H1 (cell line): ENCODE measurements at regions of chr19 and their contacts with region 1.

Region 1: GRCh38 chr19:34999498-35000341 is at the start of gene GRAMD1A:
- DNase-seq: peak; percentile 69 to 89
- H3K4me3 ChIP-seq: peak within 1 kb of the TSS; percentile 73 to 92 (median 84)
- H3K27ac ChIP-seq: peak within 1 kb of the TSS; percentile 95
- H3K4me1 ChIP-seq: peaks cover 8 to 32% (median 20%) of the 10 kb centered on the region in 4 experiments
- H3K27me3 ChIP-seq: no peaks in the 10 kb centered on the region
- CTCF ChIP-seq: no peak
- EP300 ChIP-seq: no peak
- POLR2A ChIP-seq: peak; percentile 80 to 90
- RAD21 ChIP-seq: no peak
- total RNA-seq, gene GRAMD1A: 152 and 154 TPM in 2 replicates

Region 2: DNA sequence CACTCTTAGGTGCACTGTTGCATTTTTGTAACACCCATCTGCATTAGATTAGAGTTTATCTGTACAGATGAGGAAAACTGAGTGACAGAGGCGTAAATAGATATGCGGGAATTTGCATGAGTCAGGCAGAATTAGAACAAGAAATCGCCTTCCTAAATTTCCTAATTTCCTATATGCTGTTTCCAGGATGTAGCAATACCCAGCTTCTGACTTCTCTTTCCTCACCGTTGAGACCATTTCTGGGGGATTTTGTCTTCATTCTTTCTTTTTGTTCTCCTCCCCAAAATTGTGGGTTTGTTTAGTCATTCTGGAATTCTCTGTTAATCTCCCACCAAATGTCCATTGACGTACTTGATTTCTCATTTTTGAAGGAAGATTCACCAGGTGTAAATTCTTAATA is 25.1 kb before region 1 on chr19:
- CTCF ChIA-PET with region 1: interaction called, 12 read pairs
- POLR2A ChIA-PET with region 1: interaction called, 12 read pairs
- DNase-seq: no peak
- H3K4me3 ChIP-seq: no peak overlapping the region
- H3K27ac ChIP-seq: no peak overlapping the region
- H3K4me1 ChIP-seq: peaks cover 0 to 3% (median 0%) of the 10 kb centered on the region in 4 experiments; a peak in 3 of 7 replicates
- H3K27me3 ChIP-seq: no peaks in the 10 kb centered on the region
- CTCF ChIP-seq: no peak
- EP300 ChIP-seq: no peak
- POLR2A ChIP-seq: no peak
- RAD21 ChIP-seq: no peak

Region 3: DNA sequence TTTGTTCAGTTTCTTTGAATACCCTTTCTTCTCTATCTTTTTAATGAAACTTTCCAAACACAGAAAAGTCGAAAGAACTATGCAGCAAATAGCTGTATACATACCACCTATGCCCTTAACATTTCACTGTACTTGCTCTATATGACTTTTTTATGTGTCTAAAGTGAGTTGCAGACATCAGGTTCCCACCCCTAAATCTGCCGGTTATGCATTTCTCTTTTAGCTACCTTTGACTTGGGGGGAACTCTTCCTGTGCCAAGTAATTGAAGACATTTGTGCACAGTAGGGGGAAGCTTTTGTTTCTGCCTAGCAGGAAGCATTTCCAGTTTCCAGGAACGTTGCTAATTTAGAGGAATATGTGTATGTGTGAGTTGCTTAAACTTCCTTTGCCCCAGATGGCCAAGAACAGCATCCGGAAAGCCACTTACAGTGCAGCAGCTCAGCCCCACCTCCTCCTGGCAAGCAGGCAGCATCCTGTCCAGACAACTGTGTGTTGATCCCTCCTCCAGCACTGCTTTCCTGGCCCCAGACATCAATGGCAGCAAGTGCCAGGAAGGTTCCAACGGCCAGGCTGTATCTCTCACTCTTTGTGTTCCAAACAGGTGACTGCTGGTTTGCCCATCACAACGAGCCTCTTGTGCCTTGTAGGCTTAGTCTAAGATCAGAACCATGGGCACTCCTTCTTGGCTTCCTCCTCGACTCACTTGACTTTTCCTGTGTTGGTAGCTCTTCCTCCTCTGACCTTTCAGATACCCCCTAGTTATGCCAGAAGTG is 14.3 kb before region 1 on chr19:
- CTCF ChIA-PET with region 1: interaction called, 4 read pairs
- POLR2A ChIA-PET with region 1: interaction called, 17 read pairs
- DNase-seq: peak in 1 of 2 experiments; percentile 60
- H3K4me3 ChIP-seq: 0 out of 8 replicates have a peak overlapping the region, but pooled peaks of 1 of the 4 experiments have one; percentile 2
- H3K27ac ChIP-seq: peak overlapping the region; percentile 47; the same call in 1 of the 2 replicates
- H3K4me1 ChIP-seq: peaks cover 2 to 7% (median 4%) of the 10 kb centered on the region in 4 experiments; a peak in 5 of 7 replicates
- H3K27me3 ChIP-seq: no peaks in the 10 kb centered on the region
- CTCF ChIP-seq: peak; percentile 4 to 35 (median 21); a peak in 2 of 4 replicates
- EP300 ChIP-seq: no peak
- POLR2A ChIP-seq: no peak
- RAD21 ChIP-seq: peak; percentile 2 to 10; a peak in 2 of 4 replicates

Region 4: DNA sequence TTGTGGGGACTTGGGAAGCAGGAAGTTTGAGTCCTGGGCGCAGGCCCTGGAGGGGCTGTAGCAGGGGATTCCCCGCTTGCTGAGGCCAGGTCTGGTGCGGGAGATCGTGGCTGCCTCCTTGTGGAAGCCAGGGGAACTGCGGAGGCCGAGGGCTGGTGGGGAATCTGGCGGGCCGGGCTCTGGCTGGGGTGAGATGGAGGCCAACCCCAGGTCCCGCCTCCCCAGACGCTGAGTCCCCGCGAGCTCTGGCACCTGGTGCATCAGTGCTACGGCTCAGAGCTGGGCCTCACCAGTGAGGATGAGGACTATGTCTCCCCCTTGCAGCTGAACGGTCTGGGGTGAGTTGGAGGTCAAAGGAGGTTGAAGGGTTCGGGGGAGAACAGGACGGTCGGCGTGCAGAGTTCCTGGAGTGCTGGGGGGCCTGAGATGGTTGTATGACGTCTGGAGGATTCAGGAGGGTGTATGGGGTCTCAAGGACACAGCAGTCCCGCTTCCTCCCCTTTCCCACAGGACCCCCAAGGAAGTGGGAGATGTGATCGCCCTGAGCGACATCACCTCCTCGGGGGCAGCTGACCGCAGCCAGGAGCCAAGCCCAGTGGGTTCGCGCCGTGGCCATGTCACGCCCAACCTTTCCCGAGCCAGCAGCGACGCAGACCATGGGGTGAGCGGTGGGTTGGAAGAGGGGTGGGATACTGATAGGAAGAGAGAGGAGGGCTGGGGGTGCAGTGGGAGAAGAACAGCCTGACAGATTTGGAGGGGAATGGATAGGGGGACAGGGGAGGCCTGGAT is 13.5 kb after region 1 on chr19:
- CTCF ChIA-PET with region 1: interaction called, 18 read pairs
- POLR2A ChIA-PET with region 1: interaction called, 366 read pairs
- DNase-seq: peak in 1 of 2 experiments; percentile 97
- H3K4me3 ChIP-seq: no peak overlapping the region
- H3K27ac ChIP-seq: 0 out of 2 replicates have a peak overlapping the region, but pooled peaks have one; percentile 9
- H3K4me1 ChIP-seq: no peaks in the 10 kb centered on the region
- H3K27me3 ChIP-seq: no peaks in the 10 kb centered on the region; a peak in 1 of 7 replicates
- CTCF ChIP-seq: peak; percentile 96 to 98 (median 98)
- EP300 ChIP-seq: no peak
- POLR2A ChIP-seq: peak in 1 of 2 experiments; percentile 34; a peak in 2 of 3 replicates
- RAD21 ChIP-seq: peak; percentile 96

Region 5: DNA sequence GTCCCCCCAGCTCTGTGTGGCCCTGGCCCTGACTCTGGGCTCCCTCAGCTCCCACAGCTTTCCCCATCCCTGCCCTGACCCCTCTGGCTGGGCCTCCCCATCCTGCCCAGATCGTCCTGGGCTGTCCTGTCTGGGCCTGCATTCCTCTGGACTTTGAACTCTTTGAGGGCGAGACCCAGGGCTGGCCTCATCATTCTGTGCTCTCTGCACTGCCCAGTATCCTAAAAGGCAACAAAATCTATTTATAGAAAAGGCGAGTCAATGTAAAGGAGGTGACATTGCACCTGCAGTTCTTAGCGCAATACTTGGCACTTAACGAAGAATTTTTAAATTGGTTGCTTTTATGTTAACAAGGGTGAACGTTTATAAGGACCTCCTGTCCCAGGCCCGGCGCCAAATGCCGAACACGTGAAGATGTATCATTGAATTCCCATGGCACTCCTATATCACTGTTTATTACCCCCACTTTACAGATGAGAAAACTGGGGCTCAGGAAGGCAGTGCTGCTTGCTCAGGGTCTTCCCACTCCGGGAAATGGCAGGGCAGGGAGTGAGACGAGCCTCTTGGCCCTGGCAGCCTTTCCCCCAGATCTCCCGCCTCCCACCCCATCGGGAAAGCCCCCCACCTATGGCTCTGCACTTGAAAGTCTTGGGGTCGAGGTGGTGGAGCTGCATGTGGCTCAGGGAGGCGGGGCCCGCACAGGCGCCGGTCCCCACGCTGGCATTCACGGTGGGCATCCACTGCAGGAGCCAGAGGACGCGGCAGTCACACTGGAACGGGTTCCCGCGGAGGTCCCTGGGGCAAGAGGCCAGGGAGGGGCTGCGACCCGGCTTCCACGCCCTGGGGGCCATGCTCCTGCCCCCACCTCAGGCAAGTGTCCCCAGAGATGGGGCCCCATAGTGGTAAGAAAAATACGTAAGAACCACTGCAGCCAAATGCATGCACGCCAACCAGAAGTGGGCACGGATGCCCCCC is 131.3 kb after region 1 on chr19:
- CTCF ChIA-PET with region 1: no interaction called
- POLR2A ChIA-PET with region 1: no interaction called
- DNase-seq: no peak
- H3K4me3 ChIP-seq: no peak overlapping the region
- H3K27ac ChIP-seq: no peak overlapping the region
- H3K4me1 ChIP-seq: peaks cover 3 to 11% (median 6%) of the 10 kb centered on the region in 4 experiments; a peak in 5 of 7 replicates
- H3K27me3 ChIP-seq: no peaks in the 10 kb centered on the region; a peak in 1 of 7 replicates
- CTCF ChIP-seq: no peak
- EP300 ChIP-seq: no peak
- POLR2A ChIP-seq: no peak
- RAD21 ChIP-seq: no peak